CD4-positive, alpha-beta T cell (primary cell): ENCODE measurements at regions of chr1 and their contacts with region 1.

Region 1: GRCh38 chr1:147890177-147890790 is 12.3 kb upstream of the GJA8 start:
- DNase-seq: peak; percentile 33 to 73 (median 52)
- ATAC-seq: peak; percentile 65
- H3K4me3 ChIP-seq: no peak overlapping the region
- H3K4me3 Mint-ChIP-seq: no peak overlapping the region
- H3K27ac ChIP-seq: no peak overlapping the region
- H3K27ac Mint-ChIP-seq: no peak overlapping the region
- H3K4me1 ChIP-seq: peaks cover 2% of the 10 kb centered on the region
- H3K4me1 Mint-ChIP-seq: peaks cover 8% of the 10 kb centered on the region
- H3K27me3 ChIP-seq: no peaks in the 10 kb centered on the region
- H3K27me3 Mint-ChIP-seq: peaks cover 5% of the 10 kb centered on the region
- CTCF ChIP-seq: peak; percentile 68

Region 2: GRCh38 chr1:147494998-147495580 is 395.2 kb before region 1 on chr1:
- CTCF ChIA-PET with region 1: interaction called, 7 read pairs
- POLR2A ChIA-PET with region 1: no interaction called
- intact Hi-C with region 1: loop called (anchors 1 kb)
- DNase-seq: peak; percentile 50 to 85 (median 64)
- ATAC-seq: peak; percentile 96
- H3K4me3 ChIP-seq: no peak overlapping the region
- H3K4me3 Mint-ChIP-seq: no peak overlapping the region
- H3K27ac ChIP-seq: no peak overlapping the region
- H3K27ac Mint-ChIP-seq: no peak overlapping the region
- H3K4me1 ChIP-seq: peaks cover 6% of the 10 kb centered on the region
- H3K4me1 Mint-ChIP-seq: no peaks in the 10 kb centered on the region
- H3K27me3 ChIP-seq: no peaks in the 10 kb centered on the region
- H3K27me3 Mint-ChIP-seq: peaks cover 12% of the 10 kb centered on the region
- CTCF ChIP-seq: peak; percentile 96

Region 3: DNA sequence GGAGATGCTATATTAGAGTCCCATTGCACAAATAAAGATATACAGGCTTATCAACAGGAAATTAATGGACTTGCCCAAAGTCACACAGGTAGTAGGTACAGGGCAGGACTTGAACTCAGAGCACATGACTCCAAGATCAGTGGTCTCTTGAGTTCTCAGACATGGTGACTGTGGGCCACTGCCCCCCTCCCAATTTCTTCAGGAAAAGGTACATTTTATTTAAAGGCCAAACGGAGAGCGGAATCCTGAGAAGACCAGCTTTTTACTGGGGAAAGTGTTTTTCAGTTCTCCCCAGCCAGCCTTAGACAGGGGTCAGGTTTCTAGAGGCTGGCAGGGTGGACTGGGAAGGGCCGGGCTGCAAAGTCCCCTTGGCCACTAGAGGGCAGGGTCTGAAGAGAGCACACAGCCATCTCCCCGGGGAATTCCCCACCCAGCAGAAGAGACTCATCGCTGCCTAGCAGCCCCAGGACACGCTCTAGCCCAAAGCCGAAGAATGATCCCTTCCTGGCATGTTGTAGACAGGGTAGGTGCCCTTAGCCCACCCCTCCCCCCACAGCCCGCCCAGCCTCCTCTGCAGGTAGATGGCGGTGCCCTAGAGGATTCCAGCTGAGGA is 249.6 kb before region 1 on chr1:
- CTCF ChIA-PET with region 1: interaction called, 5 read pairs
- POLR2A ChIA-PET with region 1: no interaction called
- intact Hi-C with region 1: loop called (anchors 1 kb)
- DNase-seq: peak; percentile 57 to 92 (median 68)
- ATAC-seq: peak; percentile 100
- H3K4me3 ChIP-seq: no peak overlapping the region
- H3K4me3 Mint-ChIP-seq: no peak overlapping the region
- H3K27ac ChIP-seq: no peak overlapping the region
- H3K27ac Mint-ChIP-seq: peak overlapping the region; percentile 31
- H3K4me1 ChIP-seq: peaks cover 20% of the 10 kb centered on the region
- H3K4me1 Mint-ChIP-seq: peaks cover 29% of the 10 kb centered on the region
- H3K27me3 ChIP-seq: no peaks in the 10 kb centered on the region
- H3K27me3 Mint-ChIP-seq: no peaks in the 10 kb centered on the region
- CTCF ChIP-seq: peak; percentile 79

Region 4: GRCh38 chr1:147723691-147724323 is 166.5 kb before region 1 on chr1:
- CTCF ChIA-PET with region 1: interaction called, 5 read pairs
- POLR2A ChIA-PET with region 1: no interaction called
- intact Hi-C with region 1: loop called (anchors 1 kb)
- DNase-seq: peak in 7 of 14 experiments; percentile 9 to 63 (median 36)
- ATAC-seq: no peak
- H3K4me3 ChIP-seq: no peak overlapping the region
- H3K4me3 Mint-ChIP-seq: no peak overlapping the region
- H3K27ac ChIP-seq: no peak overlapping the region
- H3K27ac Mint-ChIP-seq: no peak overlapping the region
- H3K4me1 ChIP-seq: peaks cover 6% of the 10 kb centered on the region
- H3K4me1 Mint-ChIP-seq: no peaks in the 10 kb centered on the region
- H3K27me3 ChIP-seq: no peaks in the 10 kb centered on the region
- H3K27me3 Mint-ChIP-seq: peaks cover 23% of the 10 kb centered on the region
- CTCF ChIP-seq: peak; percentile 36

Region 5: DNA sequence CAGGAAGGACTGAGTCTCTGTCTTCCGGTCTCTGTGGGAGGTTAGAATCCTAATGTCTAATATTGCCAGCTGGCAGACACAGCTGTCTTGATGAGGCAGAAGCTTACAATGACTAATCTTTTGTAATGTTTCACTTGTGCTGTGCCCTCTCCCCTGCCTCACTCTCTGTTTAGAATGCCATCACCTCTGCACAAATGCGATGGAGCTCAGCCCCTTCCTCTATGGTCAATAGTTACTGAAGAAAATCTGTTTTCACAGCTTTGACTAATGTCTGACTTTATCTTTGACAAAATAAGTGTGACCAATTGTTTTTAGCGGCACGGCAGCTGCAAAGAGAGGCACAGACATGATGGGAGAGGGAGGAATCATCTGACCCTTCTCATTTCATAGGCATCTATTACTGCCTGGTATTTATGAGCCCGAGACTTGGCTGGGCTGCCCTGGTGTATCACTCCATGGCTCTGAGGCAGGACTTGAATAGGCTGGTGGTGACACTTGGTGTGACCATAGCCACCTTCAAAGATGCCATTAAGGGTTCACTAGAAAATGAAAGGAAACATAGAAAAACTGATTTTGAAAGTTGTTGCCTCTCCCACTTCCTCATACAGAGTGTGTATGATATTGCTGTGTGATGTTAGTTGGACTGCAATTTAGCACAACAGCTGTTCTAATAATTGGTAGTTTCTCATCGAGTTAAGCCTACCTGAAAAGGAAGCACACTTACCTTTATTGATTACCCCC is 425.0 kb after region 1 on chr1:
- CTCF ChIA-PET with region 1: no interaction called
- POLR2A ChIA-PET with region 1: no interaction called
- intact Hi-C with region 1: no loop called
- DNase-seq: no peak
- ATAC-seq: no peak
- H3K4me3 ChIP-seq: no peak overlapping the region
- H3K4me3 Mint-ChIP-seq: peak overlapping the region; percentile 0
- H3K27ac ChIP-seq: no peak overlapping the region
- H3K27ac Mint-ChIP-seq: no peak overlapping the region
- H3K4me1 ChIP-seq: peaks cover 16% of the 10 kb centered on the region
- H3K4me1 Mint-ChIP-seq: peaks cover 19% of the 10 kb centered on the region
- H3K27me3 ChIP-seq: peaks cover 10 to 21% of the 10 kb centered on the region in 2 experiments
- H3K27me3 Mint-ChIP-seq: peaks cover 62% of the 10 kb centered on the region
- CTCF ChIP-seq: no peak